K562 (cell line): ENCODE measurements at regions of chr1 and their contacts with region 1.

Region 1: DNA sequence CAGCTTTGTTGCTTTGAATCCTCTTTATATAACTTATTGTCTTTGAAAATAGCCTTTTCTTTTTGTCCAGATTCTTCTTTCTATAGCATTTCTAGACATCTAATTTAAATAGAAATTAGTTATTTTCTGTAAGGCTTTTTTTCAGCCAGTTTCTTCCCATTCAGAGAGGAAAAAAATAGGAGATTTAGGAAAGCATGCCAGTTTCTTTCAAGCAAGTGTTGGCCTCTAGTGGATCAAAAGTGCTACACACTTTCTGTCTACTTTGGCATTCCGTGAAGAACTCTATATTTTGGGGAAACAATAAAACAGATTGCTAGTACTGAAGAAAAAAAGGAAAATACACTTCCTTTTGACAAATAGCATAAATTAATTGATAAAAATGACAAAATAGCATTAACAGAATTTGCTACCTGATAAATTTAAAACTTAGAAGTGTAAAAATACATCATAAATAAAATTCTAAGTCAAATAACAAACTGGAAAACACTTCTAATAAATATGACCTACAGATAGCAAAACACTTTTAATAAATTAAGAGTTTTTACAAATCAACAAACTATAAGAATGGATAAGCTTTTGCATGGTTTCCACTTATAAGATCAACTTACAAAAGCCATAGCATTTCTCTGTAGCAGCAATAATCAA is 13.1 kb upstream of the EXO1 start:
- DNase-seq: peak in 2 of 4 experiments; percentile 45 to 77
- ATAC-seq: peak; percentile 80
- H3K4me3 ChIP-seq: no peak overlapping the region
- H3K27ac ChIP-seq: no peak overlapping the region
- H3K4me1 ChIP-seq: peaks cover 6 to 19% of the 10 kb centered on the region in 2 experiments; a peak in 4 of 5 replicates
- H3K27me3 ChIP-seq: no peaks in the 10 kb centered on the region
- CTCF ChIP-seq: peak; percentile 65 to 89 (median 76); a peak in 5 of 6 replicates
- EP300 ChIP-seq: no peak
- POLR2A ChIP-seq: no peak
- RAD21 ChIP-seq: peak; percentile 92 to 93

Region 2: DNA sequence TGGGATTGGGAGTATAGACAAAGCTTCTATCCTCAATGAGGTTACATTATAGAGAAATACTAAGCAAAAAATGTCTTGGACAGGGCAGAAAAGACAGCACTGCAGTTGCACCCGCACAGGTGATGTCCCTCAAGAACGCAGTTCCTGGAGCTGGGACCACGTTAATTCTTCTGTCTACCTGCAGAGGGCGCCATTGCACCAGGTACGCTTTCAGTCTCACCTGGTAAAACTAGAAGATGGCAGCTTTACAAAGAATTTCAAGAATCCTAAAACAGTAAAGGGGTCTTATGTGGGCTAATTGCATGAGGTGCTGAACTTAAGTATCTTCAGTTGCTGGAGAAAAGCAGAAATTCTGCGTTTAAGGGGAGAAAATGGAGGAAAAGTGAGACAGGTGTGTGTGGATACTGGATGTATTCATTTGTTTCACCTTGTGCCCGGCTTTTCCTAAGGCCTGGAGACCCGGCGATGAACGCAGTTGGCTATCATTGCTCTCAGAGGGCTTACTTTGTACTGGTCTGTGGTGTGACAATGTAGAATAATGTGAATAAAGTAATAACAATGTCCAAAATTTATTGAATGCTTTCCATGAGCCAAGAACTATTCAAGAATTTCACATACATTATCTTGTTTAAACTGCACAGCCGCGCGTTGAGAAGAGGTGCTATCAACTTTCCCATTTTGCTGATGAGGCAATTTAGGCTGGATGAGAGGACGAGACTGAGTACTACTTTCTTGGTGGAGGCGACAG is 946.6 kb before region 1 on chr1:
- CTCF ChIA-PET with region 1: no interaction called
- POLR2A ChIA-PET with region 1: no interaction called
- in situ Hi-C with region 1: no loop called
- intact Hi-C with region 1: loop called (anchors 10 kb)
- DNase-seq: peak; percentile 57 to 71 (median 68)
- ATAC-seq: peak; percentile 91
- H3K4me3 ChIP-seq: no peak overlapping the region
- H3K27ac ChIP-seq: no peak overlapping the region
- H3K4me1 ChIP-seq: no peaks in the 10 kb centered on the region
- H3K27me3 ChIP-seq: no peaks in the 10 kb centered on the region
- CTCF ChIP-seq: peak; percentile 70 to 91 (median 76)
- EP300 ChIP-seq: no peak
- POLR2A ChIP-seq: no peak
- RAD21 ChIP-seq: peak; percentile 73 to 81

Region 3: DNA sequence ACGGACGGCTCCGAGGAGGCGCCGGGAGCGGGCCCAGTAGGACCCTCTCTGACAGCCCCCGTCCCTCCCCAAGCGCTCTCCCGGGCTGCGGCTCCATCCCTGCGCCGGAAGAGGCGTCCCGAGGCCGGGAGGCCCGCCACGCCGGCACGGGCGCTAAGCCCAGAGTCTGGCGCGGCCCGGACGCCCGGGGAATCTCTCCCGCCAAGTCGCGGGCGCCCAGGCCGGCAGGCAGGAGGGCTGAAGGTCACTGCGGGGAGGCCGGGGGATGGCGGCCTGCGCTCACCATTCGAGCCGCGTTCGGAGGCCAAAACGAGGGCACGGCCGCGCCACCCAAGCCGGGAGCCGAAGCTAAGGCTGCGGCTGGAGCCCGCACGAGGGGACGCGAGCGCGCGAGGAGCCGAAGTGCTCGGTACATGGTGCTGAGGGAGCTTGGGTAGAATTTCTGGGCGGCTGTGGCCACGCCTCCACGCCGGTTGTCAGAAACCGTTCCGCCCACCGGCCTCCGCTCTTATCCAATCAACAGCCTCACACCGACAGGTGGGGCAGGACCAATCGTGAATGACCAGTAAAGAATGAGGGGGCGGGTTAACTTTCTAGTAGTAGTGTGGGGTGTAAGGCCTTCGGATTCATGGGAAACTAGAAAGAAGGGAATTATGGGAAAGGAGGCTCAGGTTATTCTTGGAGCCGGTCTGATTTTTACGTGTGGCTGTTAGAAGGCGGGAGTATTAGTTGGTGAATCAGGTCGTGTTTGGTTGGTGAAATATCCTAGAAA is 315.4 kb before region 1 on chr1 and contains the start of gene FH:
- CTCF ChIA-PET with region 1: no interaction called
- POLR2A ChIA-PET with region 1: no interaction called
- in situ Hi-C with region 1: loop called (anchors 10 kb)
- intact Hi-C with region 1: no loop called
- DNase-seq: peak; percentile 98 to 100 (median 98)
- ATAC-seq: peak; percentile 97
- H3K4me3 ChIP-seq: peak within 1 kb of the TSS; percentile 79
- H3K27ac ChIP-seq: peak within 1 kb of the TSS; percentile 83
- H3K4me1 ChIP-seq: peaks cover 0 to 7% of the 10 kb centered on the region in 2 experiments; a peak in 3 of 5 replicates
- H3K27me3 ChIP-seq: no peaks in the 10 kb centered on the region
- CTCF ChIP-seq: no peak
- EP300 ChIP-seq: no peak; the same call in 1 of the 2 replicates
- POLR2A ChIP-seq: peak; percentile 97
- RAD21 ChIP-seq: no peak
- polyA plus RNA-seq, gene FH: 117 to 163 TPM

Region 4: DNA sequence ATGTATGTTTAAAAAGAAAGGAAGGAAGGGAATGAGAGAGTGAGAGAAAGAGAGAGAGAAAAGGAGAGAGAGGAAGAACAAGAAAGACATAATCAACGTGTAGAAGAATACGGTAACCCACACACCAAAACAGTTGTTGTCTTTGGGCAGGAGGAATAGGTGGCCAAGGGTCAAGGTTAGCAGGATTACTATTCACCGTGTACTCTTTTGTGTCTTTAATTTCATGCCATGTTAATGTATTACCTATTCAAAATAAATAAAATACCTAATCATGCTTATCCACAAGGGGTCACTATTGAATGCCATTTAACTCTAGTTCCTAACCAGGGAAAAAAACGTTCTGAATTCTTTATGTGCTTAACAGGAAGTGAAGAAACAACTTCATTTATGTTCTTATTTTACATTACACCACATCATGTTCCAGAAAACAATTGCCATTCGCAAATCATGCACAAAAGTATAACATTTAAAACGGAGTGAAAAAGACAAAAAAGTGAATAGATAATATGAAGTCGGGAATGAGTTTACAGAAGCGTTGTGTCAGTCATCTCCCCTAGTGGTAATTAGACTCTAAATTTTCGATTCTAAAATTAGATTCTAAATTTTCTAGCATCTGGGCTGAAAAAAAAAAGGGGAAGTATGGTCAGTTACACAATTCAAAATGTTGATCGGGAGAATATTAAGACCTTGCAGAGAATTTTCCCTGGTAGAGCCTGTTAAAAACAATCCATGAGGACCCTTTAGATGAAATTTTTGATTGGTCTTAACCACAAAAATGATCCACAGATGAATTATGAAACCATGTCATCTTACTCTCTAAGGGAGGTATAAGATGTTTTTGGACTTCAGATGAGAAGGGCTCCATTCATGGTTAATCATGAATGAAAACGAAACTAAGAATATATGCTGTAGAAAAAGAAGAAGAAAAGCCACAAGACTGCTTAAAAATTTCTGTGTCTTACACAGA is 303.4 kb before region 1 on chr1:
- CTCF ChIA-PET with region 1: interaction called, 20 read pairs
- POLR2A ChIA-PET with region 1: no interaction called
- in situ Hi-C with region 1: loop called (anchors 10 kb)
- intact Hi-C with region 1: loop called (anchors 1 kb)
- DNase-seq: peak; percentile 32 to 83 (median 51)
- ATAC-seq: peak; percentile 87
- H3K4me3 ChIP-seq: peak overlapping the region; percentile 31
- H3K27ac ChIP-seq: peak overlapping the region; percentile 48
- H3K4me1 ChIP-seq: peaks cover 0 to 4% of the 10 kb centered on the region in 2 experiments; a peak in 2 of 5 replicates
- H3K27me3 ChIP-seq: no peaks in the 10 kb centered on the region
- CTCF ChIP-seq: peak; percentile 55 to 91 (median 61)
- EP300 ChIP-seq: no peak; the same call in 1 of the 2 replicates
- POLR2A ChIP-seq: no peak
- RAD21 ChIP-seq: peak; percentile 95 to 97

Region 5: DNA sequence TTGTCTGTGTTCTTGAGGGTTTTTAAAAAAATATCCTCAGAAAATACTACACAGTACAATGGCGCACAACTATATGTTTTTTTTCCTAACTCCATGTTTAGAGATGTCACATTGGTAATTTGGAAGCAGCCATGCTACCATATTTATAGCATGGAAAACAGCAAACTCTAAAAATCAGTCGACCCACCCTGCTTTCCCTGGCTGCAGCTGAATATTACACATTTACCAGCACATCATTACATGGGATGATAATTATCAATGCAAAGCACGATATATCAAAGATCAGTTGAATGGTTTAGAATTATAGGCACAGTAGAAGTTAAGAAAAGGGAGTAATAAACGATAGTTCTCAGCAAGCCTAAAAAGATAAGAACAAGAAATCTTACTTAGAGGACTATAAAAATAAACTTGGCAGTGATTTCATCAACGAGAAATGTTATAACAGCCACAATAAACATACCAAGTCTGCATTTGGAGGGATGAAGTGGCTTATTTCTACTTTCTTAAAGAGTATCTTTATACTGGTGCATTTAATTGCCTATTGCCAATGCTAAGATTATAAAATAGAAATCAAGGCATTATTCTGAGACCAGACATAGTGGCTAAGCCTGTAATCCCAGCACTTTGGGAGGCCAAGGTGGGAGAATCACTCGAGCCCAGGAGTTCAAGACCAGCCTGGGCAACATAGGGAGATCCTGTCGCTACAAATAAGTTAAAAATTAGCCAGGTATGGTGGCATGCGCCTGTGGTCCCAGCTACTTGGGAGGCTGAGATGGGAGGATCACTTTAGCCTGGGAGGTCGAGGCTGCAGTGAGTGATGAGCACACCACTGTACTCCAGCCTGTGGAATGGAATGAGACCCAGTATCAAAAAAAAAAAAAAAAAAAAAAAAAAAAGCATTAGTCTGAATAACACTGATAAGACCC is 139.3 kb before region 1 on chr1:
- CTCF ChIA-PET with region 1: no interaction called
- POLR2A ChIA-PET with region 1: interaction called, 5 read pairs
- in situ Hi-C with region 1: no loop called
- intact Hi-C with region 1: loop called (anchors 2 kb)
- DNase-seq: no peak
- ATAC-seq: no peak
- H3K4me3 ChIP-seq: no peak overlapping the region
- H3K27ac ChIP-seq: peak overlapping the region; percentile 94
- H3K4me1 ChIP-seq: peaks cover 15 to 47% of the 10 kb centered on the region in 2 experiments
- H3K27me3 ChIP-seq: no peaks in the 10 kb centered on the region
- CTCF ChIP-seq: no peak
- EP300 ChIP-seq: no peak; the same call in 1 of the 2 replicates
- POLR2A ChIP-seq: no peak
- RAD21 ChIP-seq: no peak

Region 6: GRCh38 chr1:241770115-241770514 is 64.7 kb before region 1 on chr1:
- CTCF ChIA-PET with region 1: no interaction called
- POLR2A ChIA-PET with region 1: no interaction called
- in situ Hi-C with region 1: no loop called
- intact Hi-C with region 1: loop called (anchors 1 kb)
- DNase-seq: peak in 2 of 4 experiments; percentile 61 to 71
- ATAC-seq: peak; percentile 95
- H3K4me3 ChIP-seq: no peak overlapping the region
- H3K27ac ChIP-seq: peak overlapping the region; percentile 22; the same call in 1 of the 3 replicates
- H3K4me1 ChIP-seq: peaks cover 4 to 19% of the 10 kb centered on the region in 2 experiments; a peak in 4 of 5 replicates
- H3K27me3 ChIP-seq: no peaks in the 10 kb centered on the region
- CTCF ChIP-seq: no peak
- EP300 ChIP-seq: no peak
- POLR2A ChIP-seq: no peak
- RAD21 ChIP-seq: no peak

Region 7: GRCh38 chr1:241782396-241782795 is 52.5 kb before region 1 on chr1:
- CTCF ChIA-PET with region 1: no interaction called
- POLR2A ChIA-PET with region 1: no interaction called
- in situ Hi-C with region 1: no loop called
- intact Hi-C with region 1: no loop called
- DNase-seq: peak in 2 of 4 experiments; percentile 24
- ATAC-seq: peak; percentile 75
- H3K4me3 ChIP-seq: no peak overlapping the region
- H3K27ac ChIP-seq: no peak overlapping the region
- H3K4me1 ChIP-seq: peaks cover 4% of the 10 kb centered on the region in 2 experiments; a peak in 3 of 5 replicates
- H3K27me3 ChIP-seq: no peaks in the 10 kb centered on the region
- CTCF ChIP-seq: no peak
- EP300 ChIP-seq: no peak
- POLR2A ChIP-seq: no peak
- RAD21 ChIP-seq: no peak

Region 8: GRCh38 chr1:241918879-241919278 is 84.0 kb after region 1 on chr1:
- CTCF ChIA-PET with region 1: no interaction called
- POLR2A ChIA-PET with region 1: no interaction called
- in situ Hi-C with region 1: no loop called
- intact Hi-C with region 1: no loop called
- DNase-seq: no peak
- ATAC-seq: peak; percentile 60
- H3K4me3 ChIP-seq: no peak overlapping the region
- H3K27ac ChIP-seq: no peak overlapping the region
- H3K4me1 ChIP-seq: peaks cover 0 to 3% of the 10 kb centered on the region in 2 experiments; a peak in 2 of 5 replicates
- H3K27me3 ChIP-seq: peaks cover 15 to 17% of the 10 kb centered on the region in 2 experiments; a peak in 4 of 5 replicates
- CTCF ChIP-seq: no peak
- EP300 ChIP-seq: no peak
- POLR2A ChIP-seq: no peak
- RAD21 ChIP-seq: no peak